Uterus (tissue), 4 donors: ENCODE measurements at regions of chr12 and their contacts with region 1.

Region 1: DNA sequence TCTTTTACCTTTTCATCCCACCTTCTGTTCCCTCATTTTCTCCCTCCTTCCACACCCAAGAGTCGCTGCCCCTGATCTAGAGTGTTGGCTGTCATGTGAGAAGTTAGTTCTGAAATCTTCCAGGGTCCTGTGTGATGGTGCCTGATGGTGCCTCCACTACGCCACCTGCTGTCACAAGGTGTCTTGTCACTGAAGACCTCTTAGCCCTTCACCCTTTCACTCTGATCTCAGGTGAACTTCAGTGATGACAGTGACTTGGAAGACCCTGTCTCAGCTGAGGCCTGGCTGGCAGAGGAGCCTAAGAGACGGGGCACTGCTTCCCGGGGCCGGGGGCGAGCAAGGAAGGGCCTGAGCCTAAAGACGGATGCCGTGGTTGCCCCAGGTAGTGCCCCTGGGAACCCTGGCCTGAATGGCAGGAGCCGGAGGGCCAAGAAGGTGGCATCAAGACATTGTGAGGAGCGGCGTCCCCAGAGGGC is 7.6 kb upstream of the PFDN5 start:
- DNase-seq: peak; percentile 64 to 72
- H3K4me3 ChIP-seq: no peak overlapping the region
- H3K27ac ChIP-seq: no peak overlapping the region
- H3K4me1 ChIP-seq: no peaks in the 10 kb centered on the region
- H3K27me3 ChIP-seq: no peaks in the 10 kb centered on the region
- CTCF ChIP-seq: peak; percentile 59 to 84 (median 74)
- POLR2A ChIP-seq: no peak

Region 2: DNA sequence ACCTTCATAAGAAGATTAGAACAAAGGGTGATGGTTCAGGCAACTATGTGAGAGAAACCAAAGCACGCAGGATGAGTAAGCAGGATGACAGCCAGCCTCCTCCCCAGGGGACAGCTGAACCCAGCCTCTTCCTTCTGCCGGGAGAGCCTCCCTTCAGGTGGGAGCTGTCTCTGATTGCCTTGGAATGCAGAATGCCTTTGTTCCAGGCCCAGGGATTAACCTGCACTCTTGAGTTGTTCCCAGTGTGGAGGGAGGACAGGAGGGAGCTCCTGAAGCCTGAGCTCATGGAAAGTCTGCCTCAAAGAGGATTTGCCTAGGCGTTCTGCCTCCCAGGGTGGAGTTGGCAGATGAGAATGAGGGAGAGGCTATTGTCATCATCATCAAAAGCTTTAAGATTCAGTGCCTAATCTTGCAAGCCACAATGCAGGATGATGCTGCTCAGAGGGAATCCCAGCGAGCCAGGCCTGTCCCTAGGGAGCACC is 791.1 kb before region 1 on chr12:
- intact Hi-C with region 1: no loop called
- DNase-seq: peak in 1 of 2 donors; percentile 44
- H3K4me3 ChIP-seq: no peak overlapping the region
- H3K27ac ChIP-seq: peak overlapping the region; percentile 4 to 46
- H3K4me1 ChIP-seq: no peaks in the 10 kb centered on the region
- H3K27me3 ChIP-seq: no peaks in the 10 kb centered on the region
- CTCF ChIP-seq: no peak
- POLR2A ChIP-seq: no peak

Region 3: DNA sequence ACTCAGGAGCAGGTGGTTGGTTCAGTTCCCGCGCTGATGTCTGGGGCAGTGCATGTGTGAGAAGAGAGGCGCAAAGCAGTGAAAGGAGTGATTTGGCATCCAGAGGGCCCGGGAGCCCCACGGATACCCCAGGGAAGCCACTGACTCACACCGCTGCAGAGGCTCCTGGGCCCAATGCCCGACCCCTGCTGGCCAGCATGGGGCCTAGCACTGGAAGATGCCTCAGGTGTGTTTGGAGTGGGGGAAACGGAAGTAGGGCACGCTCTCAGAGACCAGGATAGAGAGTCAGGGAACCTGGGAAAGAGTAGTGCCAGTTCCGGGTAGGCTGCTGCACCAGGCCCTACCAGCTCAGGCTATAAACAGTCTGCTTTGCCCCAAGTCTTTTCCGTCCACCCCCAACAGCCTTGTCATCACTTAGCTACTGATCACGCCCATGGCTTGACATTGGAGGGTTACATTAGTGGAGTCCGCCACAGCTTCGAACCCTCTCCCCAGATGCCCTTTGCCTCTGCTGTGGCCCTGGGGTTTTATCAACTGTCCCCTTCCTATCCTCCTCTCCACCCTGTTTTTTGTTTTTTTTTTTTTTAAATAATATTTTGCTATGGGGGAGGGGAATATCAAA is 97.6 kb before region 1 on chr12:
- intact Hi-C with region 1: no loop called
- DNase-seq: peak; percentile 57 to 69
- H3K4me3 ChIP-seq: no peak overlapping the region
- H3K27ac ChIP-seq: peak overlapping the region; percentile 28 to 34
- H3K4me1 ChIP-seq: no peaks in the 10 kb centered on the region
- H3K27me3 ChIP-seq: no peaks in the 10 kb centered on the region
- CTCF ChIP-seq: peak; percentile 61 to 85 (median 72)
- POLR2A ChIP-seq: no peak

Region 4: DNA sequence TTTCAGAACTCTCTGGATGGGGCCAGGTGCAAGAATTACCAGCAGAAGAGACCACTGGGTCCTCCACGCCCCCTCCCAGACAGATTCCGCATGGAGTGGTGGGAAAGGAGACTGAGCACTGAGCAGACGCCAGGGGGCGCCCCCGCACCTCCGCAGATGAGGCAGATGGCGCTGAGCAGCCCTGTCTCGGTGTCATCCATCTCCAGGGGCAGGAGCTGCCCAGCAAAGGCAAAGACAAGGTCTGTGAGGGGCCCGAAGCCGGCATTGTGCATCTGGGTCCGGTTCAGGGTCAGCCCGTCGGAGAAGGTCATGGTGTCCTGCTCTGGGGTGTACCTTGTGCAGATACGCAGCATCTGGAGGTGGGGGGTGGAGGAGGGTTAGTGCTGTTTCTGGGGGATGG is 74.4 kb before region 1 on chr12:
- intact Hi-C with region 1: loop called (anchors 10 kb)
- DNase-seq: peak; percentile 82 to 84
- H3K4me3 ChIP-seq: no peak overlapping the region
- H3K27ac ChIP-seq: no peak overlapping the region
- H3K4me1 ChIP-seq: peaks cover 6 to 16% of the 10 kb centered on the region in 2 donors
- H3K27me3 ChIP-seq: no peaks in the 10 kb centered on the region
- CTCF ChIP-seq: peak; percentile 94 to 98 (median 96)
- POLR2A ChIP-seq: peak in 1 of 2 donors; percentile 30

Region 5: GRCh38 chr12:53670299-53670698 is 382.5 kb after region 1 on chr12:
- intact Hi-C with region 1: no loop called
- DNase-seq: no peak
- H3K4me3 ChIP-seq: no peak overlapping the region
- H3K27ac ChIP-seq: no peak overlapping the region
- H3K4me1 ChIP-seq: no peaks in the 10 kb centered on the region
- H3K27me3 ChIP-seq: no peaks in the 10 kb centered on the region
- CTCF ChIP-seq: no peak
- POLR2A ChIP-seq: no peak